Aorta (tissue), 5 donors: ENCODE measurements at regions of chr10 and their contacts with region 1.

Region 1: GRCh38 chr10:75612904-75613684 is 181.7 kb downstream of the LRMDA start:
- DNase-seq: no peak
- ATAC-seq: peak; percentile 45
- H3K4me3 ChIP-seq: no peak overlapping the region
- H3K27ac ChIP-seq: no peak overlapping the region
- H3K4me1 ChIP-seq: peaks cover 4 to 14% of the 10 kb centered on the region in 2 donors
- H3K27me3 ChIP-seq: no peaks in the 10 kb centered on the region

Region 2: DNA sequence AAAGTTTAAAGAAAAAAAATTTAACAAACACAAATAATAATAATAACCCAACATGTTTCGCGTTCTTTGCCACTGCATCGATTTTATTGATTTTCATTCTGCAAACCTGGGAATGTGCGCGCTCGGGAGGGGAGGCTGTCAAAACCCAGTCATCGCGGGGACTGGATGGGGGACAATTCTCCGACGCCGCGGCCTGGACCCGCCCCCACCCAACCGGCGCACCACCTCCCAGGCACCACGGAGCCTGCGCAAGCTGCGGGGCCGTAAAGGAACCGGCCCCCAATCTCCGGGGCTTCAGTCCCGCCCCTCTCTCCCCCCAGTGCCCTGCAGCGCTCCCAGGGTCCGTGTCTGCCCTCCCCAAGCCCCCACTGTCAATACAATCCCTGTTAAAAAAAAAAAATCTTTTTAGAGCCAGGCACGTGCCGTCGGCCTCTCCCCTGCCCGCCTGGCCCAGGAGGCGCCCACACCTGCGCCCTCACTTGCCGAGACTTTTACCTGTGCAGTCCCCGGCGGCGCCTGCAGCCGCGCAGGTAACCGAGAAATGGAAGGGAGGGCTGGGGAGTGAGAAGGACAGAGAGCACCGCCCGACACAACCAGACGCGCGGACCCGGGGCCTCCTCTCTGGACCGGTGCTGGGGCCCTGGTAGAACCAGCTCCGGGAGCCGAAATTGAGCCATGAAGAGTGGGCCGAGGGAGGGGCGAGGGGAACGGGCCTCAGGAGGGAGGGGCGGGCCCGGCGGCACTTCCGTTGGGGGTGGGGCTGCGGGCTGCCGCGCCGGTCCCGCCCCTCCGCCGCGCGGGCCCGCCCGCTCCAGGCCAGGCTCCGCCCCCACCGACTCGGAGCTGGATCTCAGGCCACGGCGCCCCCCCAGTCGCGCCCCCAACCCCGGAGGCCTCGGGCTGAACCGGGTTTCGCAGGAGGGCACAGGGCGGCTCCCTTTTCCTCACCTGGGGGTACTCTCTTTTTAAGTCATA is 203.9 kb before region 1 on chr10:
- intact Hi-C with region 1: loop called in 1 of 2 experiments (anchors 5 kb)
- DNase-seq: peak; percentile 89 to 91
- ATAC-seq: peak; percentile 88
- H3K4me3 ChIP-seq: peak overlapping the region; percentile 70 to 95
- H3K27ac ChIP-seq: peak overlapping the region; percentile 59 to 82
- H3K4me1 ChIP-seq: no peaks in the 10 kb centered on the region
- H3K27me3 ChIP-seq: no peaks in the 10 kb centered on the region